Activated naive CD4-positive, alpha-beta T cell treated with anti-CD3 and anti-CD28 coated beads for 36 hours (primary cell): ENCODE measurements at regions of chr9 and their contacts with region 1.

Region 1: GRCh38 chr9:123305879-123306278 is 37.5 kb upstream of the STRBP start:
- DNase-seq: no peak
- H3K4me3 Mint-ChIP-seq: no peak overlapping the region
- H3K27ac Mint-ChIP-seq: no peak overlapping the region
- H3K4me1 Mint-ChIP-seq: peaks cover 40% of the 10 kb centered on the region
- H3K27me3 Mint-ChIP-seq: no peaks in the 10 kb centered on the region

Region 2: DNA sequence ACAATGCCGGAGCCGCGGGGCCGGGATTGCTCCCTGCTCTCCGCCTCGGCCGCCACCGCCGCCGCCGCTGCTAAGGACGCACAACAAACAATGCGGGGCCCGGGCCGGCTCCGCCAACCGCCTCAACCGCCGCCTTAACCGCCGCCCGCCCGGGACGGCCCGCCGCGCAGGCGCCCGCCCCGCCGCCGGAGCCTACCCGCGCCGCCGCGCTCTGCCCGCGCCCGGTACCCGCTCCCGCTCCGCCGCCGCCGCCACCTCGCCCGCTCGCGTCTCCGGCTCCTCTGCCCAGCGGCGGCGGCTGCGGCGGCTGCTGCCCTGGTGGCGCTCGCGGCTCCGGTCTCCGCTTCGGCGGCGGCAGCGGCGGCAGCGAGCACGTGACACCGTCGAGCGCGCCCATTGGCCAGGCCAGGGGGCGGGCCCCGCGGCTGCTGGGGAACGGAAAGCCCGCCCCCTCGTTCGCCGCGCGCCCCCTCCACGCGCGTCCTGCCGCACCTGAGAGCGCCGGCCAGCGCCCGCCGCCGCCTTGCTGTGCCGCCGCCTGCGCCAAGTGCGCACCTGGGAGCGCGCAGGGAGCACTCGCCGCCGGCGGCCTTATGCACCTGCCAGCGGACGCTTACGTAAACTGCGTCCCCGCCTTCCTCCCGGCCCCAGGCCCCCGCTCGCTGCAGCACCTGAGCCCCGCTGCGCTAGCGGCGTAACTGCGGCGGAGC is 37.5 kb before region 1 on chr9 and contains the start of gene STRBP:
- CTCF ChIA-PET with region 1: no interaction called
- intact Hi-C with region 1: loop called (anchors 2 kb)
- DNase-seq: peak; percentile 90
- H3K4me3 Mint-ChIP-seq: peak within 1 kb of the TSS; percentile 74
- H3K27ac Mint-ChIP-seq: no peak within 1 kb of the TSS
- H3K4me1 Mint-ChIP-seq: peaks cover 28% of the 10 kb centered on the region
- H3K27me3 Mint-ChIP-seq: no peaks in the 10 kb centered on the region
- total RNA-seq, gene STRBP: 27.6 to 27.8 TPM

Region 3: GRCh38 chr9:123322273-123323195 is 16.7 kb after region 1 on chr9:
- CTCF ChIA-PET with region 1: interaction called, 5 read pairs
- intact Hi-C with region 1: loop called (anchors 1 kb)
- DNase-seq: peak; percentile 84
- H3K4me3 Mint-ChIP-seq: peak overlapping the region; percentile 25
- H3K27ac Mint-ChIP-seq: peak overlapping the region; percentile 80
- H3K4me1 Mint-ChIP-seq: peaks cover 31% of the 10 kb centered on the region
- H3K27me3 Mint-ChIP-seq: no peaks in the 10 kb centered on the region